ENCODE measurements at regions of chr1 and their contacts with region 1.

Region 1: DNA sequence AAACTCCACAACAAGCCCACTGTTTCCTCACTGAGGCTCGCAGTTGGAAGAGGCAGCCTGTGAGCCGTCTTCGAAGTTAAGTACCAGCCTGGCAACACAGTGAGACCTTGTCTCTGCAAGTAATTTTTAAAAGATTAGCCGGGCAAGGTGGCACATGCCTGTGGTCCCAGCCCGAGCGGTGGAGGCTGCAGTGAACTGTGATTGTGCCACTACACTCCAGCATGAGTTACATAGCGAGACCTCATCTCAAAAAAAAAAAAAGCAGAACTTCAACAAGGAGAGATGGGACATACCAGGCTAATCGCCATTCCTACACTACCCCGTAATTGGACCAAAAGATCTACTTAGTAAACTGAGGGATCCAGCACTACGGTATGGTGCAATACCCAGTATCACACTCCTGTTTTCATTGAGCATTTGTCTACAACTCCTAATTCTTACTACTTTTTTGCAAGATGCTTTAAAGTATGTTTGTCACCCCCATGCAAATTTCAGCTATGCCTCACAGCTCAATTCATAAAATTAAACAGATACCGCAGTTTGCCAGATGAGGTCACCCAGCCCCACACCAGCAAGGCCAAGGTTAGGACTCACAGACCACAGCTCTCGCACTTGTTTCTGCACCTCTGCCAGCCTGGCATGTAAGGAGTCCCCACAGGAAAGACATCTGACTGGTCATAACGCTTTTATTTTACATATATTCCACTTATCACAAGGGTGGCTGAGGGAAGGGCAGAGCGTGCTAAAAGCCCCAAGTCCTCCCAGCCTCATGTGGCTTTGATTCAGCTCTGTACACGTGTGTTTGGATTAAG is 21.0 kb downstream of the SDE2 start:
- DNase-seq: no peak
- ATAC-seq: peak; percentile 79
- H3K4me3 Mint-ChIP-seq: peak overlapping the region; percentile 63
- H3K27ac Mint-ChIP-seq: peak overlapping the region; percentile 81
- H3K4me1 Mint-ChIP-seq: peaks cover 33% of the 10 kb centered on the region
- H3K27me3 Mint-ChIP-seq: no peaks in the 10 kb centered on the region
- CTCF ChIP-seq: no peak

Region 2: GRCh38 chr1:224513787-224514209 is 1464.3 kb before region 1 on chr1:
- CTCF ChIA-PET with region 1: no interaction called
- POLR2A ChIA-PET with region 1: no interaction called
- intact Hi-C with region 1: loop called (anchors 2 kb)
- DNase-seq: peak; percentile 65
- ATAC-seq: peak; percentile 88
- H3K4me3 Mint-ChIP-seq: no peak overlapping the region
- H3K27ac Mint-ChIP-seq: no peak overlapping the region
- H3K4me1 Mint-ChIP-seq: peaks cover 5% of the 10 kb centered on the region
- H3K27me3 Mint-ChIP-seq: no peaks in the 10 kb centered on the region
- CTCF ChIP-seq: peak; percentile 98

Region 3: DNA sequence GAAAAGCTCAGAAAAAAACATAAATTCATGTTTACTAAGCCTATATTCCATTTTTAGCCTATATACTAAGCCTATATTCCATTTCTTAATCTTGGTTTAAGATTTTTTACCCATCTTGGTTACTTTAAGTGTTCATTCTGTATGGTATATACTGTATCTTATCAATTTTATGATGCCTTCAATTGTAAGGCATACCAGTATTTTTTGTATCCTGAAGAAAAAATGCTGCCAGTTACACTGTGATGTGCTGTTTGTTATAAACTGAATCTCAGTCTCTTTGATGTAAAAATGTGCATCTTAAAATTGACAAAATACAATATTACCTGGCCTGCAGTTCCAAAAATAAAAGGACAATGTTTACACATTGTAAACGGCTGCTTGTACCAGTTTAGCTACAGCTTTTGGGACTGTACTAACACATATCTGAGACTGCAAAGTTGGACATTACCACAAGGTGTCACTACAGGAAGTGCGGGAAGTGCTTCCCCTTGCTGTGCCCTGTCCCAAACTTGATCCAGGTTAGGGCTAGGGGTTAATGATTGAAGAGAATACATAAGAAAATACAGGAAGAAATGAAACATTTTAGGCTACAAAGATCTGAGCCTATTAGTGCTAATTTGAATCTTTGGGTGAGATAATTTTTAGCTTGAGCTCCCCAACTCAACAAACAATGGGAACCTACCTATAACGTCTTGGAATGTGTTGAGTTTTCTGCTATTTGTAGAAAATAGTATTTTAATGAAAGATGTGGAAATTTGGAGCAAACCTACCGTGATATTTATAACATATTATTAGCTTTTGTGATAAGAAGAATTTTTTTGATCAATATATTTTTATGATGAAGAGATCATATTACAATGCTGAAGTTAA is 659.2 kb before region 1 on chr1:
- CTCF ChIA-PET with region 1: interaction called, 12 read pairs
- POLR2A ChIA-PET with region 1: no interaction called
- intact Hi-C with region 1: loop called (anchors 1 kb)
- DNase-seq: no peak
- ATAC-seq: peak; percentile 50
- H3K4me3 Mint-ChIP-seq: no peak overlapping the region
- H3K27ac Mint-ChIP-seq: no peak overlapping the region
- H3K4me1 Mint-ChIP-seq: no peaks in the 10 kb centered on the region
- H3K27me3 Mint-ChIP-seq: peaks cover 10% of the 10 kb centered on the region
- CTCF ChIP-seq: no peak

Region 4: DNA sequence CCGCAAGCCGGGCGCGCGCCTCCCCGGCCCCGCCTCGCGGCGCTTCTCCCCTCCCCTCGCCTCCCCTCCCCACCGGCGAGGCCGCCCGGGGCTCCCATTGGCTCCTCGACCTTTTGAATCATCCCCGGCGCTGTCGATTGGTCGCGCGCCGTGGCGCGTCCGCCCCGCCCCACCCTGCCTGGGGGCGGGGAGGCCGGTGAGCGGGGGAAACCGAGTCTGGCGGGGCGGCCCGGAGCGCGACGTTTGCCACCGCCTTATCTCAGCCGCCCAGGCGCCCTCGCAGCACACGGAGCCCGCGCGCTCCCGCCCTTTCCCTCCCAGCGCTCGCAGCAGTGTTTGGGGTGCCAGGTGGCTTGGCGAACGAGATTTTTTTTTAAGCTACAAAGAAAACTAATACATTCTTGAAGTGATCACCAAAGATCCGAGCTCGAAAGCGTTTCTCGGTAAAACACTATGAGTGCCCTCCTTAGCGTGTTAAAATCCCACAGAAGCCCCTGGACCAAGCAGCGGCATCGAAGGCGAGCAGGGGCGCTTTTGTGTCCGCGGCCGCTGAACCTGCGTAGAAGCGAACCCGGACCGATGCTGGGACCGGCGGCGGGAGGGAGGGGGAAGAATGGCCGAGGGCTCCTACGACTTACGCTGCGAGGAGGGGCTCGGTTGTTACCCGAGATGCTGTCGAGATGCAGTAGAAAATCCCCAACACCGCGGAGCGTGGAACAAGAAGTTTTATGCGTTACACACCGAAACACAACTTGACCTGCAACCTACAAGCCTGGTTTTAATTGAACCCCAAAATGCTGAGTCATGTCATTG is 549.9 kb before region 1 on chr1:
- CTCF ChIA-PET with region 1: no interaction called
- POLR2A ChIA-PET with region 1: no interaction called
- intact Hi-C with region 1: loop called (anchors 5 kb)
- DNase-seq: peak; percentile 88
- ATAC-seq: peak; percentile 92
- H3K4me3 Mint-ChIP-seq: peak overlapping the region; percentile 89
- H3K27ac Mint-ChIP-seq: peak overlapping the region; percentile 90
- H3K4me1 Mint-ChIP-seq: peaks cover 48% of the 10 kb centered on the region
- H3K27me3 Mint-ChIP-seq: no peaks in the 10 kb centered on the region
- CTCF ChIP-seq: no peak

Region 5: GRCh38 chr1:225554216-225554812 is 423.8 kb before region 1 on chr1:
- CTCF ChIA-PET with region 1: interaction called, 3 read pairs
- POLR2A ChIA-PET with region 1: no interaction called
- intact Hi-C with region 1: loop called (anchors 1 kb)
- DNase-seq: no peak
- ATAC-seq: no peak
- H3K4me3 Mint-ChIP-seq: no peak overlapping the region
- H3K27ac Mint-ChIP-seq: no peak overlapping the region
- H3K4me1 Mint-ChIP-seq: no peaks in the 10 kb centered on the region
- H3K27me3 Mint-ChIP-seq: peaks cover 4% of the 10 kb centered on the region
- CTCF ChIP-seq: no peak

Region 6: GRCh38 chr1:225923692-225924555 is 54.2 kb before region 1 on chr1 and contains the start of gene PYCR2:
- CTCF ChIA-PET with region 1: interaction called, 4 read pairs
- POLR2A ChIA-PET with region 1: interaction called, 5 read pairs
- intact Hi-C with region 1: loop called (anchors 5 kb)
- DNase-seq: peak; percentile 93
- ATAC-seq: peak; percentile 98
- H3K4me3 Mint-ChIP-seq: peak within 1 kb of the TSS; percentile 95
- H3K27ac Mint-ChIP-seq: peak within 1 kb of the TSS; percentile 88
- H3K4me1 Mint-ChIP-seq: peaks cover 20% of the 10 kb centered on the region
- H3K27me3 Mint-ChIP-seq: no peaks in the 10 kb centered on the region
- CTCF ChIP-seq: no peak
- total RNA-seq, gene PYCR2: 109 and 110 TPM in 2 replicates

Region 7: GRCh38 chr1:226201029-226201593 is 223.0 kb after region 1 on chr1:
- CTCF ChIA-PET with region 1: interaction called, 4 read pairs
- POLR2A ChIA-PET with region 1: no interaction called
- intact Hi-C with region 1: loop called (anchors 2 kb)
- DNase-seq: no peak
- ATAC-seq: no peak
- H3K4me3 Mint-ChIP-seq: no peak overlapping the region
- H3K27ac Mint-ChIP-seq: no peak overlapping the region
- H3K4me1 Mint-ChIP-seq: peaks cover 27% of the 10 kb centered on the region
- H3K27me3 Mint-ChIP-seq: peaks cover 2% of the 10 kb centered on the region
- CTCF ChIP-seq: no peak